ENCODE measurements at regions of chr12 and their contacts with region 1.

Region 1: DNA sequence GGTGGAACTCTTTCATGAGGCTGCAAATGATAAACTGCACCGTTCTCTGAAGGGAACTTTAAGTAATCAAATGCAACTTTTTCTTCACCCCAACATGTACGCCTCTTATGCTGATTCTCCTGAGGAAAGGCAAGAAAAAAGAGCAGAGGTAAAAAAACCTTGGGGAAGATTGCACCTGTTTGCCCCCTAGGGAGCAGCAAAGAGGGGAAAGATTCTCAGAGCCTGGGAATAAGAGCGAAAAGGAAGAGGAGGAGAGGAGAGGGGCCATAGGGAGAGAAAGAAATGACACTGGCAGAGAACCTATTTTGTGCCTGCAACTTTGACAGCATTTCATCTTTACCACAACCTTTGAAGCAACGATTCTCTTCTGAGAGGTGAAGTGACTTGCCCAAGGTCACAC is 254.6 kb downstream of the KSR2 start:
- DNase-seq: no peak
- ATAC-seq: no peak
- H3K4me3 ChIP-seq: no peak overlapping the region
- H3K27ac ChIP-seq: no peak overlapping the region
- H3K4me1 ChIP-seq: no peaks in the 10 kb centered on the region
- H3K27me3 ChIP-seq: peaks cover 0 to 6% (median 0%) of the 10 kb centered on the region in 3 donors
- CTCF ChIP-seq: no peak

Region 2: GRCh38 chr12:117732761-117733160 is 18.6 kb after region 1 on chr12:
- intact Hi-C with region 1: loop called in 1 of 2 experiments (anchors 1 kb)
- DNase-seq: no peak
- ATAC-seq: no peak
- H3K4me3 ChIP-seq: no peak overlapping the region
- H3K27ac ChIP-seq: no peak overlapping the region
- H3K4me1 ChIP-seq: no peaks in the 10 kb centered on the region
- H3K27me3 ChIP-seq: peaks cover 0 to 4% (median 0%) of the 10 kb centered on the region in 3 donors
- CTCF ChIP-seq: no peak